B cell (primary cell): ENCODE measurements at regions of chr1 and their contacts with region 1.

Region 1: GRCh38 chr1:42846257-42847110 is at the start of gene ZNF691:
- DNase-seq: peak; percentile 93
- ATAC-seq: peak; percentile 98
- H3K4me3 ChIP-seq: peak within 1 kb of the TSS; percentile 80 to 92 (median 90)
- H3K4me3 Mint-ChIP-seq: peak within 1 kb of the TSS; percentile 95
- H3K27ac ChIP-seq: peak within 1 kb of the TSS; percentile 41 to 76
- H3K27ac Mint-ChIP-seq: peak within 1 kb of the TSS; percentile 91
- H3K4me1 ChIP-seq: peaks cover 17 to 24% of the 10 kb centered on the region in 2 donors
- H3K4me1 Mint-ChIP-seq: peaks cover 46% of the 10 kb centered on the region
- H3K27me3 ChIP-seq: no peaks in the 10 kb centered on the region
- H3K27me3 Mint-ChIP-seq: no peaks in the 10 kb centered on the region
- CTCF ChIP-seq: peak; percentile 16
- total RNA-seq, gene ZNF691: 17.1 and 18.4 TPM in 2 replicates

Region 2: GRCh38 chr1:42035830-42036604 is 810.5 kb before region 1 on chr1:
- CTCF ChIA-PET with region 1: no interaction called
- POLR2A ChIA-PET with region 1: no interaction called
- intact Hi-C with region 1: loop called (anchors 5 kb)
- DNase-seq: peak; percentile 95
- ATAC-seq: peak; percentile 94
- H3K4me3 ChIP-seq: peak overlapping the region; percentile 13 to 93 (median 83)
- H3K4me3 Mint-ChIP-seq: peak overlapping the region; percentile 72
- H3K27ac ChIP-seq: peak overlapping the region in 1 of 2 donors; percentile 34
- H3K27ac Mint-ChIP-seq: peak overlapping the region; percentile 67
- H3K4me1 ChIP-seq: peaks cover 13 to 15% of the 10 kb centered on the region in 2 donors
- H3K4me1 Mint-ChIP-seq: peaks cover 12% of the 10 kb centered on the region
- H3K27me3 ChIP-seq: peaks cover 0 to 6% (median 0%) of the 10 kb centered on the region in 4 experiments
- H3K27me3 Mint-ChIP-seq: peaks cover 13% of the 10 kb centered on the region
- CTCF ChIP-seq: no peak

Region 3: DNA sequence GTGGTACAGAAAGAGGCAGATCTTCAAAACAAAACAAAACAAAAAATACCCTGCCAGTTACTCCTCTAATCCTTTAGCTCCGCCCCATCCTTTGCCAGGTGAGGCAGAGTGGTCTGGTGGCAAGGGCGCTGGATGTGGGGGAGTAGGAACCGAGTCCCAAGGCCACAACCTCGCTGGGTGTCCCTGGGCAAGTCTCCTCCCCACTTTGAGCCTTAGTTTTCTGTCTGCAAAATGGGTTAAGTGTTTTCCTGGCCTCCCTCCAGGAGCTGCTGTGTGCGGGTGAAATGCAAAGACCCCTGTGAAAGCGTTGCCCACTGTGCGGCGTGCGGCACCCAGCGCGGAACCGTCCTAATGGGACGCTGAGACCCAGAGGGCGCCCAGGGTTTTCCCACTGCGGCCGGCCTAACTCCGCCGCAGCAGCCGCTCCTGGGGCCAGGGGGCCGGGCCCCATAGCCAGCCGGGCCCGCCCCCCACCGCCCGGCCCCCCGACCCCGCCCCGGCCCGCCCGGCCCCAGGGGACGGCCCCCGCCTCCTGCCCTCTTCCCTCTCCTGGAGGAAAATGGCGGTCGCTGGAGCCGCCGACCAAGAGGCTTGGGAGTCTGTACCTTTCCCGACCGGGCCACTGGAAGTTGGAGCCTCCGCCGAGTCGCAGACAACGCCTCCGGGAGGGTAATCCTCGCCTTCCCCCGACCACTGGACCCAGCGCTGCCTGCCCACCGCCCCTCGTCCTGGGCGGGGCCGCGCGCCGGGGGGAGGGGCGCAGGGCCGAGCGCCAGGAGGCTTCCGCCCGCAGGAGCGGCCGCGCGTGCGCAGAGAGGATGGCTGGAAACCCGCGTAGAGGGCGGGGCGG is 29.7 kb before region 1 on chr1 and contains the starts of genes ERMAP and SVBP:
- CTCF ChIA-PET with region 1: interaction called, 4 read pairs
- POLR2A ChIA-PET with region 1: interaction called, 16 read pairs
- intact Hi-C with region 1: loop called (anchors 1 kb)
- DNase-seq: peak; percentile 97
- ATAC-seq: peak; percentile 86
- H3K4me3 ChIP-seq: peak within 1 kb of the TSS; percentile 57 to 82 (median 77)
- H3K4me3 Mint-ChIP-seq: peak within 1 kb of the TSS; percentile 89
- H3K27ac ChIP-seq: peak within 1 kb of the TSS; percentile 75 to 82
- H3K27ac Mint-ChIP-seq: peak within 1 kb of the TSS; percentile 92
- H3K4me1 ChIP-seq: peaks cover 13% of the 10 kb centered on the region in 2 donors
- H3K4me1 Mint-ChIP-seq: peaks cover 20% of the 10 kb centered on the region
- H3K27me3 ChIP-seq: no peaks in the 10 kb centered on the region
- H3K27me3 Mint-ChIP-seq: no peaks in the 10 kb centered on the region
- CTCF ChIP-seq: no peak
- total RNA-seq, gene ERMAP: 13.1 and 13.5 TPM in 2 replicates
- total RNA-seq, gene SVBP: 21.9 and 23.2 TPM in 2 replicates

Region 4: GRCh38 chr1:43024905-43025304 is 178.4 kb after region 1 on chr1:
- CTCF ChIA-PET with region 1: no interaction called
- POLR2A ChIA-PET with region 1: no interaction called
- intact Hi-C with region 1: no loop called
- DNase-seq: no peak
- ATAC-seq: no peak
- H3K4me3 ChIP-seq: no peak overlapping the region
- H3K4me3 Mint-ChIP-seq: no peak overlapping the region
- H3K27ac ChIP-seq: no peak overlapping the region
- H3K27ac Mint-ChIP-seq: no peak overlapping the region
- H3K4me1 ChIP-seq: no peaks in the 10 kb centered on the region
- H3K4me1 Mint-ChIP-seq: no peaks in the 10 kb centered on the region
- H3K27me3 ChIP-seq: peaks cover 0 to 4% (median 2%) of the 10 kb centered on the region in 4 experiments
- H3K27me3 Mint-ChIP-seq: no peaks in the 10 kb centered on the region
- CTCF ChIP-seq: no peak

Region 5: DNA sequence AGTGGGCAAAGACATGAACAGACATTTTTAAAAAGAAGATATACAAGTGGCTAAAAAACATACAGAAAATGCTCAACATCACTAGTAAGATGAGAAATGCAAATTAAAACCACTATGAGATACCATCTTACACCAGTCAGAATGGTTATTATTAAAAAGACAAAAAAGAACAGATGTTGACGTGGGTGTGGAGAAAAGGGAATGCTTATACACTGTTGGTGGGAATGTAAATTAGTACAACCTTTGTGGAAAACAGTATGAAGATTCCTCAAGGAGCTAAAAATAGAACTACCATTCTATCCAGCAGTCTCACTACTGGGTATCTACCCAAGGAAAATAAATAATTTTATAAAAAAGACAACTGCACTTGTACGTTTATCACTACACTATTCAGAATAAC is 251.7 kb after region 1 on chr1:
- CTCF ChIA-PET with region 1: no interaction called
- POLR2A ChIA-PET with region 1: no interaction called
- intact Hi-C with region 1: no loop called
- DNase-seq: no peak
- ATAC-seq: no peak
- H3K4me3 ChIP-seq: no peak overlapping the region
- H3K4me3 Mint-ChIP-seq: no peak overlapping the region
- H3K27ac ChIP-seq: no peak overlapping the region
- H3K27ac Mint-ChIP-seq: no peak overlapping the region
- H3K4me1 ChIP-seq: no peaks in the 10 kb centered on the region
- H3K4me1 Mint-ChIP-seq: no peaks in the 10 kb centered on the region
- H3K27me3 ChIP-seq: no peaks in the 10 kb centered on the region
- H3K27me3 Mint-ChIP-seq: peaks cover 26% of the 10 kb centered on the region
- CTCF ChIP-seq: no peak